ENCODE measurements at regions of chr11 and their contacts with region 1.

Region 1: GRCh38 chr11:56783448-56784041 is 35.0 kb upstream of the OR9G4 start:
- DNase-seq: no peak
- ATAC-seq: no peak
- H3K4me3 ChIP-seq: no peak overlapping the region
- H3K27ac ChIP-seq: no peak overlapping the region
- H3K4me1 ChIP-seq: no peaks in the 10 kb centered on the region
- H3K27me3 ChIP-seq: no peaks in the 10 kb centered on the region
- CTCF ChIP-seq: peak; percentile 51

Region 2: DNA sequence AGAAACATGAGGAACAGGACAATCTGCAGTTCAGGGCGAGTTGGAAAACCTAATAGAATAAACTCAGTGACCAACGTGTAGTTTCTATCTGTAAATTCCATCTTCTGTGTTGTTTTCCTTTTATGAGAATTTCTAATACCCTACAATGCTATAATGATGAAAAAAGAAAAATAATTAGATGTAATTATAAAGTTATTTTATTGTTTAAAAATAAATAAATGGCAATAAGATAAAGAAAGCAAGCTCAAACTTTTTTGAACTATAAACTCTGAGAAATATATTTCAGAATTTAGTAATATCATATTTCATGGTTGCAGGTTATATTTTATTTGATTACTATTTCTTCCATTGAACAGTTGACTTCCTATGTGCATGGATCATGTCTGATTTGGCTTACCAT is 847.2 kb before region 1 on chr11 and contains the start of gene OR5I1:
- intact Hi-C with region 1: loop called (anchors 5 kb)
- DNase-seq: no peak
- ATAC-seq: no peak
- H3K4me3 ChIP-seq: no peak within 1 kb of the TSS
- H3K27ac ChIP-seq: no peak within 1 kb of the TSS
- H3K4me1 ChIP-seq: no peaks in the 10 kb centered on the region
- H3K27me3 ChIP-seq: no peaks in the 10 kb centered on the region
- CTCF ChIP-seq: no peak
- total RNA-seq, gene OR5I1: not detected

Region 3: GRCh38 chr11:55942785-55943392 is 840.7 kb before region 1 on chr11:
- intact Hi-C with region 1: loop called (anchors 5 kb)
- DNase-seq: no peak
- ATAC-seq: no peak
- H3K4me3 ChIP-seq: no peak overlapping the region
- H3K27ac ChIP-seq: no peak overlapping the region
- H3K4me1 ChIP-seq: no peaks in the 10 kb centered on the region
- H3K27me3 ChIP-seq: no peaks in the 10 kb centered on the region
- CTCF ChIP-seq: peak; percentile 41

Region 4: GRCh38 chr11:56716379-56716854 is 67.1 kb before region 1 on chr11:
- intact Hi-C with region 1: no loop called
- DNase-seq: no peak
- ATAC-seq: no peak
- H3K4me3 ChIP-seq: no peak overlapping the region
- H3K27ac ChIP-seq: no peak overlapping the region
- H3K4me1 ChIP-seq: no peaks in the 10 kb centered on the region
- H3K27me3 ChIP-seq: peaks cover 0 to 2% (median 0%) of the 10 kb centered on the region in 3 donors
- CTCF ChIP-seq: no peak

Region 5: DNA sequence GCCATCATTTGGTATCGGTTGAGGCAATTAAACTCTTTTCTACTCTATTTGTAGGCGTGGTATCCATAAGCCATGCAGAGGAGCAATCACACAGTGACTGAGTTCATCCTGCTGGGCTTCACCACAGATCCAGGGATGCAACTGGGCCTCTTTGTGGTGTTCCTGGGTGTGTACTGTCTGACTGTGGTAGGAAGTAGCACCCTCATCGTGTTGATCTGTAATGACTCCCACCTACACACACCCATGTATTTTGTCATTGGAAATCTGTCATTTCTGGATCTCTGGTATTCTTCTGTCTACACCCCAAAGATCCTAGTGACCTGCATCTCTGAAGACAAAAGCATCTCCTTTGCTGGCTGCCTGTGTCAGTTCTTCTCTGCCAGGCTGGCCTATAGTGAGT is 43.4 kb before region 1 on chr11:
- intact Hi-C with region 1: no loop called
- DNase-seq: no peak
- ATAC-seq: no peak
- H3K4me3 ChIP-seq: no peak overlapping the region
- H3K27ac ChIP-seq: no peak overlapping the region
- H3K4me1 ChIP-seq: no peaks in the 10 kb centered on the region
- H3K27me3 ChIP-seq: no peaks in the 10 kb centered on the region
- CTCF ChIP-seq: no peak

Region 6: GRCh38 chr11:57131080-57131790 is 347.7 kb after region 1 on chr11:
- intact Hi-C with region 1: no loop called
- DNase-seq: peak in 1 of 2 donors; percentile 23
- ATAC-seq: peak in 2 of 4 donors; percentile 50 to 54
- H3K4me3 ChIP-seq: no peak overlapping the region
- H3K27ac ChIP-seq: no peak overlapping the region
- H3K4me1 ChIP-seq: no peaks in the 10 kb centered on the region
- H3K27me3 ChIP-seq: no peaks in the 10 kb centered on the region
- CTCF ChIP-seq: peak; percentile 49

Measured in psoas muscle (tissue), 8 donors.